ENCODE measurements at regions of chr19 and their contacts with region 1.

Region 1: GRCh38 chr19:16382775-16383543 is 58.3 kb downstream of the KLF2 start:
- DNase-seq: peak; percentile 22
- H3K4me3 ChIP-seq: no peak overlapping the region
- H3K27me3 ChIP-seq: no peaks in the 10 kb centered on the region
- CTCF ChIP-seq: peak; percentile 85

Region 2: GRCh38 chr19:16247353-16248182 is 135.4 kb before region 1 on chr19:
- CTCF ChIA-PET with region 1: interaction called, 146 read pairs
- POLR2A ChIA-PET with region 1: interaction called, 5 read pairs
- DNase-seq: no peak
- H3K4me3 ChIP-seq: no peak overlapping the region
- H3K27me3 ChIP-seq: peaks cover 1% of the 10 kb centered on the region; the same call in 1 of the 2 replicates
- CTCF ChIP-seq: peak; percentile 96

Region 3: DNA sequence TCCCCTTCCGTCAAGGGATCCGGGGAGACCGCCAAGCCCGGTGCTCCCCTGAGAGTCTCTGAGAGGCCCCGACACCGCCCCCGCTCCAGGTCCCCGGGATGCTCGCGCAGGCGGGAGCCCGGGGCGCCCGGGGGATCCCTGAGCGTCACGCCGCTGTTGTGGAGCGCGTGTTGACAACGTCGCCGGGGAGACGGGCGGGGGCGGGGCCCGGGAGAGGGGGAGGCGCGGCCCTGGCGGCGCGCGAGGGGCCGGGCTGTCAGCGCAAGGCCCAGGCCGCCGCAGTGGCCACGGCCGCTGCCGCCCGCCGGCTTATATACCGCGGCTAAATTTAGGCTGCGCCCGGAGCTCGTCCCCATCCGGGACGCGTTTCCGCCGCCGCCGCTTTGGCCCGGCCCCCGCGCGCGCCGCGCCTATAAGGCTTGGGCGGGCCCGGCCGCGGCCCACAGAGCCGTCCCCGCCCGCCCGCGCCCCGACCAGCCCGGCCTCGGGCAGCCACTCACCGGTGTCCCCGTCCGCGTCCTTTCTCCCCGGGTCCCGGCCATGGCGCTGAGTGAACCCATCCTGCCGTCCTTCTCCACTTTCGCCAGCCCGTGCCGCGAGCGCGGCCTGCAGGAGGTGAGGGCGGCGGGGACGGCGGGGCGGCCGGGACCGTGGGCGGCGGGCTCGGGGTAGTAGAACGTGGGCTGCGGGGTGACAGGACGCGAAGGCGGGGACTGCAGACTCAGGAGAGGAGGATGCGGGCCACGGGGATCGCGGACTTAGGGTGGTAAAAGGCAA is 58.4 kb before region 1 on chr19 and contains the start of gene KLF2:
- CTCF ChIA-PET with region 1: interaction called, 10 read pairs
- POLR2A ChIA-PET with region 1: no interaction called
- DNase-seq: peak; percentile 64
- H3K4me3 ChIP-seq: peak within 1 kb of the TSS; percentile 68
- H3K27me3 ChIP-seq: no peaks in the 10 kb centered on the region; the same call in 1 of the 2 replicates
- CTCF ChIP-seq: no peak
- polyA plus RNA-seq, gene KLF2: 1.7 and 1.8 TPM in 2 replicates

Region 4: GRCh38 chr19:16338470-16339360 is 44.2 kb before region 1 on chr19:
- CTCF ChIA-PET with region 1: interaction called, 17 read pairs
- POLR2A ChIA-PET with region 1: no interaction called
- DNase-seq: peak; percentile 89
- H3K4me3 ChIP-seq: no peak overlapping the region
- H3K27me3 ChIP-seq: no peaks in the 10 kb centered on the region
- CTCF ChIP-seq: peak; percentile 32; the same call in 1 of the 2 replicates

Region 5: DNA sequence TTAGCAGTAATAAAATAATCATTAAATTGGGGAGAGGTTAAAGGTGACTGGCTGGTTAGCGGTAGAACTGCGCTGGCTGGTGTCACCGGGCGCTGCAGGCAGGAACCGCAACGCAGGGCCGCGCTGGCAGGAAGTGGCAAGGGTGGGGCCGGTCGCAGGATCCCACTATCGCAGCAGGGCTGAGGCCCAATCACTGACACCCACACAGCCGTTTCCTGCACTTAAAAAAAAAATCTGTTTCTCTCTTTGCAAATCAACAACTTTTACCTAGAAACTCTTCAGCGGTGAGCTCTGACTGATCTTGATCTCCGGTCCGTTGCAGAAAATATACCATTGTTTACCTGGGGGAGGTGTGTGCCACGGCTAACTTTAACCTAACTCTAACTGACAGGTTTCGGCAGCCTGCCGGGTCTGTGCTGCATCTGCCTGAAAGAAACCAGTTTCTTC is 11.4 kb before region 1 on chr19:
- CTCF ChIA-PET with region 1: interaction called, 22 read pairs
- POLR2A ChIA-PET with region 1: no interaction called
- DNase-seq: no peak
- H3K4me3 ChIP-seq: no peak overlapping the region
- H3K27me3 ChIP-seq: no peaks in the 10 kb centered on the region
- CTCF ChIP-seq: no peak

Region 6: GRCh38 chr19:16403151-16403977 is 20.4 kb after region 1 on chr19:
- CTCF ChIA-PET with region 1: interaction called, 10 read pairs
- POLR2A ChIA-PET with region 1: no interaction called
- DNase-seq: no peak
- H3K4me3 ChIP-seq: no peak overlapping the region
- H3K27me3 ChIP-seq: no peaks in the 10 kb centered on the region
- CTCF ChIP-seq: no peak